Psoas muscle (tissue), 8 donors: ENCODE measurements at regions of chr6 and their contacts with region 1.

Region 1: GRCh38 chr6:18387061-18387721 is at the start of gene RNF144B:
- DNase-seq: peak; percentile 81 to 92
- ATAC-seq: peak; percentile 93 to 98 (median 94)
- H3K4me3 ChIP-seq: peak within 1 kb of the TSS; percentile 72
- H3K27ac ChIP-seq: peak within 1 kb of the TSS; percentile 87
- H3K4me1 ChIP-seq: peaks cover 19% of the 10 kb centered on the region
- H3K27me3 ChIP-seq: no peaks in the 10 kb centered on the region
- CTCF ChIP-seq: no peak
- total RNA-seq, gene RNF144B: 33.6 to 94.9 (median 65.4) TPM

Region 2: DNA sequence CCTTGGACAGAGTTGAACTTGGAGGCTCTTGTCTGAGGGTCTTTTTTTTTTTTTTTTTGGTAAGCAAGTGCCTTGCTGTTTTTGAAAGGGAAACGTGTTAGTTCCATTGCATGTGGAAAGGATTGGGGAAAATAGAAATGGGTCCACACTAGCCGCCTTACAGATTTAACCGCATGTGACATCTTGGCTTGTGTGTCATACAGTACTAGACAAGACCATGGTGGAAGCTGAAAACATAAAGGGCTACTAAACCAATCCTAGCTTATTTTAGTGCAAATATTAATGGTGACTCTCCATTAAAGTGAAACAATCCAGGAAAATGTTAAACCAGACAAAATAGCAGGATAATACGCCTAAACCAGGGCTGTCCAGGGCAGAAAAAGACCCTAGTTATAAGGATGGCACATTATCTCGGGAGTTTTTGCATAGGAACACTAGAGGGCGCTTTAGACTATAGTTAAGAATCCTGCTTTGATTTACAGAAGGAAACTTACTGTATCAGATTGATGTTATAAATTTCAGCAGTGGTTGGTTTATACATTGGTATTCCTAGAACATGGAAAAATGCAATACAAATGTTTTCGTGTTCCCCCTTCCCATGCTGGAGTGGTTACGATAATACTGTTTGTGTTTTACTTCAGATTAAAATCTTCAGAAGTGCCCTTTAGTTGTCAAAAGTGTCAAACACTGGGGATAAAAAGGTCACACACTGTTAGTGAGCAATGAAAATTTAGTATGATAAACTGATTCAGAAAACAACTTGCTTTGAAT is 63.1 kb before region 1 on chr6:
- intact Hi-C with region 1: loop called in 1 of 2 experiments (anchors 5 kb)
- DNase-seq: no peak
- ATAC-seq: peak; percentile 67 to 90 (median 74)
- H3K4me3 ChIP-seq: no peak overlapping the region
- H3K27ac ChIP-seq: no peak overlapping the region
- H3K4me1 ChIP-seq: peaks cover 26% of the 10 kb centered on the region
- H3K27me3 ChIP-seq: no peaks in the 10 kb centered on the region
- CTCF ChIP-seq: peak; percentile 80

Region 3: GRCh38 chr6:18343741-18344140 is 43.5 kb before region 1 on chr6:
- intact Hi-C with region 1: loop called (anchors 2 to 5 kb)
- DNase-seq: no peak
- ATAC-seq: peak in 3 of 4 donors; percentile 9 to 16 (median 11)
- H3K4me3 ChIP-seq: no peak overlapping the region
- H3K27ac ChIP-seq: peak overlapping the region; percentile 92
- H3K4me1 ChIP-seq: peaks cover 34% of the 10 kb centered on the region
- H3K27me3 ChIP-seq: no peaks in the 10 kb centered on the region
- CTCF ChIP-seq: no peak

Region 4: DNA sequence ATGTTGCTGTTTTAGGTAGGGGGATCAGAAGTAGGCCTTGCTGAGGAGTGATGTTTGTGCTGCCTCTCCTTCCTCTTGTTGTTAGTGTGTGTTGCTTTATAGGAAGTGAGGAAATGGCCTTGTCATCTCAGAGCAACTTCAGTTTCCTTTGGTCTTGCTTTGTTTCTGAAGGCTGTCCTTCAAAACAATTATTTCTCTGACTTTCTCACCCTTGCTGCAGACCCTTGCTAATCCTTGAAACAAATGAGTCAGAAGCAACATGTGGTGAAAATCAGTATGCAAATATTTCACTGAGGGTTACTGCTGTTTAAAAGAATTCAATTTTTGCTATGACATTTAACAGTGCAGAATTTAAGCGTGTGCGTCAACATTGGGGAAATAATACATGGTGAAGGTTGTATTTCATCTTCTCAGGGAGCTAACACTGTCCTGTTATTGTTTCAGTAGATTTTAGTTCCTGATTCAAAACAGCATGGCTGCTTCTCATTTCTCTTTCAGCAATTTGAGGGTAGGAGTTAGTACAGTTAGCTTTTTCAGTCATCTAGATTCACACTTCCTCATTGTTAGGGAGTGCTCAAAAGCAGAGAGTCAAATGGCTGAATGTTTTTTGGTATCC is 13.7 kb after region 1 on chr6:
- intact Hi-C with region 1: no loop called
- DNase-seq: no peak
- ATAC-seq: no peak
- H3K4me3 ChIP-seq: no peak overlapping the region
- H3K27ac ChIP-seq: peak overlapping the region; percentile 88
- H3K4me1 ChIP-seq: peaks cover 74% of the 10 kb centered on the region
- H3K27me3 ChIP-seq: no peaks in the 10 kb centered on the region
- CTCF ChIP-seq: no peak

Region 5: DNA sequence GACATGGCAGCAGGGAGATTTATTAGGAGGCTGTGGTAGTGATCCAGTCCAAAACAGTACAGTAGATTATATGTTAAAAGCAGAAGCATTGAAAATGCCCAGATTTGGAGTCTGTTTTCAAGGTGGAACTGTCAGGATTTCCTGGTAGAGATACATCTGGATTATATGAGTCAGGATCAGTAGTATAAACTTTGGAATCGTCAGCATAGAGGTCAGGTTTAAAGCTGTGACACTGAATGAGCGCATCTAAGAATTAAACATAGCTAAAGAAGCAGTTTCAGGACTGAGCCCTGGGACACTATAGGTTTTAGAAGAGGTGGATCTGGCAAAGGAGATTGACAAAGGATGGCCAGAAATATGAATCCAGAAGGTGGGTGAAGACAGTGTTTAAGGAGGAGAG is 60.4 kb after region 1 on chr6:
- intact Hi-C with region 1: loop called in 1 of 2 experiments (anchors 5 kb)
- DNase-seq: no peak
- ATAC-seq: peak in 2 of 4 donors; percentile 39 to 45
- H3K4me3 ChIP-seq: no peak overlapping the region
- H3K27ac ChIP-seq: peak overlapping the region; percentile 17
- H3K4me1 ChIP-seq: peaks cover 78% of the 10 kb centered on the region
- H3K27me3 ChIP-seq: no peaks in the 10 kb centered on the region
- CTCF ChIP-seq: no peak